ENCODE measurements at regions of chr19 and their contacts with region 1.

Region 1: DNA sequence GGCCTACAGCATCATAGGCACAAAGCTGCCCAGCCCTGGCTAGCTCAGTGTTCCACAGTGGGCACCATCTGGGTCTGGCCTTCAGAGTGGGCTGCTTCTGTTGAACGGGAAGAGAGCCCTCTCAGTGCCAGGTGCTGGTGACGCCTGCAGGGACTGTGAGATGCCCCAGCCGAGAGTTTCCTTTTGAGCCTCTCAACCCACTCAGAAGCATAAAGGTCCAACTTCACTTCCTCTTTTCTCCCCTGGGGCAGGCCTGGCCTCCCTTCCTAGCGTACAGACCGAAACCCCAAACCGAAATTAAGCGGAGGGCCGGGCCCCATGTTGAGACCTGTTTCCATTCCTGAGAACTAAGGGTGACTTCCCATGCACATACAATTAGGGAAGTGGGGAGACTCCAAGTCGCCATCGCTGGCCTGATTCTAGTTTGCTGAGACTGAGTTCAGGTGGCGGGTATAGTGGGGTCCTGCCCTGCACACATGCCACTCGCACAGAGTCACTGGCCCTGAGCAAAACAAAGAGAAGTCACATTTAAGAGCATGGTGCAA is 6.9 kb downstream of the RAB8A start:
- DNase-seq: peak; percentile 88
- CTCF ChIP-seq: no peak

Region 2: DNA sequence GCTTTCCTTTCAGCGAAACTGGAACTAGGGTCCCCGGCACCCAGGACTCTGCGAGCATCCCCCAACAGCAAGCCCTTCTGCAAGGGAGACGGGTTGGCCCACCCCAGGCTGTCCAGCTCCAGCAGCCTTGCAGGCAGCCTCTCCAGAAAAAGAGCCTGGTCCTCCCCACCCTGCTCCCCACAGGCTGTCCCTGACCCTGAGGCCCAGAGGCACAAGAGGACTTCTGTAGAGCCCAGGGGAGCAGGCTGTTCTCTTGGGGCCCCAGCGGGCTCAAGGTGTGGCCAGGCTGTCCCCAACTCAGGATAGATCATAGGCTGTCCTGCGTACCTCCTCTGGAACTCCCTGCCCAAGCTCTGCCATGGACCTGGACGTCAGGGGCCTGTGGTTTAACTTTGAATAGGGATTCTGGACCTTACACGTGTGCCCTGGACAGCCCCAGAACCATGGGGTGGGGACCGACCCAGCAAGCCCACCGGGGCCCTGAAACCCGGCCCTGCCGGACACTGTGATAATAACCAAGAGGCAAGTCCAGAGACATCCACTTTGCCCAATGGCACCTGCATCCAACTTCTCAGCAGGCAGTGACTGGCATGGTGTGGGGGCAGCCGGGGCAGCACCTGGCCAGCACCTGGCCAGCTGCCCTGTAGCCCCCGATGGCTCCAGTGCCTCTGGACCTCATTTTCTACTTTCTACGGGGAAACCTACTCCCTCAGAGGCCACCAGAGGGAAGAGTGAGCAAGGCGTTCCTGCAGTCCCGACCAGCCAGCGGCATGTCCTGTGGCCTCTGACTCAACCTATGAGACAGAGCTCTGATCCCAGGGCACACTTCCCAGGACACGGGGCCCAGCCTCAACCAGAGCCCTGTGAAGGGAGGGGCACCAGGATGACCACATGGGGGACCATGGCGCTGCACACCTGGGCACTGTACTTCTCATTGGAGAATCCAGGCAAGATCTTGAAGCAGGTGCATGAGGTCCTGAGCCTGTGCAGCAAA is 93.2 kb before region 1 on chr19:
- CTCF ChIA-PET with region 1: no interaction called
- POLR2A ChIA-PET with region 1: no interaction called
- DNase-seq: no peak
- CTCF ChIP-seq: no peak

Region 3: GRCh38 chr19:16143399-16144245 is 25.1 kb after region 1 on chr19 and contains the start of gene HSH2D:
- CTCF ChIA-PET with region 1: interaction called, 13 read pairs
- POLR2A ChIA-PET with region 1: interaction called, 11 read pairs
- DNase-seq: peak; percentile 85
- CTCF ChIP-seq: no peak